HEK293 (cell line): ENCODE measurements at regions of chr12 and their contacts with region 1.

Region 1: DNA sequence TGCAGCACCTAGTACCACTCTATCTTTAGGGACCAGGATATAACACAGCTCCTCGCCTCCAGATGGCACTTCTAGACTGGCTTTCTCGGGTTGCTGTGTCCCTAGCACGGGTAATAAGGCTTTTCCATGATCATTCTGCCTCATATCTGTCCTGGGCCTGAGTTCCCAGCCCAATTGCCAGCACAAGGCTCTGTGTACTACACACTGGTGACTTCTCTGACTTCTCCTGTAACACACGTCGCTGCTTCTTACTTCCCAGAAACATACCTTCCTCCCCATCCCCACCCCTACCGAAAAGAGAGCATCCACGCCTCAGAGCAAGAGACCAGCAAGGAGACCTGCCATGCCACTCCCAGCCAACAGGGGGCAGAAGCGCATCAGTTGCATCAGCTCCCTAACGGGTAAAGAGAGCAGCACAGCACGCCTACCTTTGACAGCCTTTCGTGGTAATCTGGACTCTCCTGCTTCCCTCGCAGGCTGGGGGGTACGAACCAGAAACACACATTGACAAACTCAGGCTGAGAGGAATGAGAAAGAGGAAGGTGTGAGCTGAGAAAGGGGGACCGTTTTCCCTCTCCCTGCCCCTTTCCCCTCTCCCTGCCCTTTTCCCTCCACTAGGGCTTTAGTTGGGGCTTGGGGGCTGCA is 21.2 kb upstream of the ZNF740 start:
- H3K4me3 ChIP-seq: no peak overlapping the region
- H3K27ac ChIP-seq: no peak overlapping the region
- H3K4me1 ChIP-seq: no peaks in the 10 kb centered on the region
- CTCF ChIP-seq: peak; percentile 99

Region 2: GRCh38 chr12:53129170-53129569 is 30.1 kb before region 1 on chr12:
- CTCF ChIA-PET with region 1: interaction called, 18 read pairs
- POLR2A ChIA-PET with region 1: no interaction called
- H3K4me3 ChIP-seq: no peak overlapping the region
- H3K27ac ChIP-seq: no peak overlapping the region
- H3K4me1 ChIP-seq: no peaks in the 10 kb centered on the region
- CTCF ChIP-seq: no peak

Region 3: DNA sequence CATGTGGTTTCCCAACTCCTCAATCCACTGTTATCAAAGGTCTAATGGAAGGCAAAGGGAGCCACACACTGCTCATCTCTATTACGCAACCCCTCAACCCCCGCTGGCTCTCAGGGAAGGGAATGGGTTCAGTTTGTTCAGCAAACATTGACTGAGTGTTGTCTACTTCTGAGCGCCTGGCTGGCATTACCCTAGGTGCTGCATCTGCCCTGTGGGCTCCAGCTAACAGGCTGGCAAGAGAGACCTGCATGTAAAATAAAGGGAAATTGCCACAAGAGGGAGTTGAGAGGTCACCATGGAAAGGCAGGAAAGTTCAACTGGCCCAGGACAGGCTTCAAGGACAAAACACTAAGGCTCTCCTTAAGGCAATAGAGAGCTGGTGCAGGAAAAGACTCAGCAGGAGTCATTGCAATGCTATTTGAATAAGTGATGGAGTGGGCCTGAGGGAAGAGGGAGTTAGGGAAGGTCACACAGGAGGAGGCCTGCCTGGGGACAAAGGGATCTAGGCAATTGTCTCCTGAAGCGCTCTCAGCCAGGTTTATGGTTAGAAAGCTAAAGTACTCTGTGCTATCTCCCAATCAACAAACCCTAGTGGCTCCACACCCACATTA is 15.7 kb after region 1 on chr12:
- CTCF ChIA-PET with region 1: interaction called, 52 read pairs
- POLR2A ChIA-PET with region 1: interaction called, 16 read pairs
- H3K4me3 ChIP-seq: no peak overlapping the region
- H3K27ac ChIP-seq: no peak overlapping the region
- H3K4me1 ChIP-seq: peaks cover 28% of the 10 kb centered on the region
- CTCF ChIP-seq: no peak

Region 4: GRCh38 chr12:53180220-53180930 is 21.1 kb after region 1 on chr12 and contains the starts of genes CSAD and ZNF740:
- CTCF ChIA-PET with region 1: interaction called, 52 read pairs
- POLR2A ChIA-PET with region 1: interaction called, 16 read pairs
- H3K4me3 ChIP-seq: peak within 1 kb of the TSS; percentile 80
- H3K27ac ChIP-seq: peak within 1 kb of the TSS; percentile 80
- H3K4me1 ChIP-seq: peaks cover 16% of the 10 kb centered on the region; the same call in 1 of the 2 replicates
- CTCF ChIP-seq: peak; percentile 79

Region 5: DNA sequence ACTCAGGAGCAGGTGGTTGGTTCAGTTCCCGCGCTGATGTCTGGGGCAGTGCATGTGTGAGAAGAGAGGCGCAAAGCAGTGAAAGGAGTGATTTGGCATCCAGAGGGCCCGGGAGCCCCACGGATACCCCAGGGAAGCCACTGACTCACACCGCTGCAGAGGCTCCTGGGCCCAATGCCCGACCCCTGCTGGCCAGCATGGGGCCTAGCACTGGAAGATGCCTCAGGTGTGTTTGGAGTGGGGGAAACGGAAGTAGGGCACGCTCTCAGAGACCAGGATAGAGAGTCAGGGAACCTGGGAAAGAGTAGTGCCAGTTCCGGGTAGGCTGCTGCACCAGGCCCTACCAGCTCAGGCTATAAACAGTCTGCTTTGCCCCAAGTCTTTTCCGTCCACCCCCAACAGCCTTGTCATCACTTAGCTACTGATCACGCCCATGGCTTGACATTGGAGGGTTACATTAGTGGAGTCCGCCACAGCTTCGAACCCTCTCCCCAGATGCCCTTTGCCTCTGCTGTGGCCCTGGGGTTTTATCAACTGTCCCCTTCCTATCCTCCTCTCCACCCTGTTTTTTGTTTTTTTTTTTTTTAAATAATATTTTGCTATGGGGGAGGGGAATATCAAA is 30.9 kb after region 1 on chr12:
- CTCF ChIA-PET with region 1: interaction called, 94 read pairs
- POLR2A ChIA-PET with region 1: interaction called, 6 read pairs
- H3K4me3 ChIP-seq: no peak overlapping the region
- H3K27ac ChIP-seq: no peak overlapping the region
- H3K4me1 ChIP-seq: no peaks in the 10 kb centered on the region
- CTCF ChIP-seq: peak; percentile 58

Region 6: DNA sequence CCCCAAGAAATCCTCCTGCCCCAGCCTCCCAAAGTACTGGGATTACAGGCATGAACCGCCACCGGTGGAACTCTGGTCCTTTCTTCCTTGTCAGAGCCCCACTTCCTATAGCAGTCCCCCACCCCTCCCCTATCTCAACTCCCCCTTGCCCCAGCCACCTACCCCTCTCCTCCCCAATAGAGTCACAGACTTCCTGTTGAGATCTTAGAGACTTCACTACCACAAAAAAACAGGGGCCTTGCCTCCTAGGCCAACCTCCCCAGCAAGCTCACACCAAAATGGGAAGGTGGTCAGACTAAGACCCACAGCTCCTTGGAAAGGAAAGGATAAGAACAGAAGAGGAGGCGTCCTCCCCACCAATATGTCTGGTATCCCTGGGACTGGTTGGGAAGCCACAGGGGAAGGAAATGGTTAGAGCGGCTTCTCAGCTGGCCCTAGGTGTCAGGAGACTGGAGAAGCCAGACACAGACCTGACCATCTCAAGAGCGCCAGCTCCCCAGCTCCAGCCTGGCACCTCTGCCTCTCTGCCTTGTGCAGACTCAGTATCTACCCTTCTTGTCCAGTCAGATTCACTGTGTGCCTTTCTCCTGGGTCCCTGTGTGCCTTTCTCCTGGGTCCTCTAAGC is 39.3 kb after region 1 on chr12:
- CTCF ChIA-PET with region 1: interaction called, 94 read pairs
- POLR2A ChIA-PET with region 1: no interaction called
- H3K4me3 ChIP-seq: no peak overlapping the region
- H3K27ac ChIP-seq: no peak overlapping the region
- H3K4me1 ChIP-seq: no peaks in the 10 kb centered on the region
- CTCF ChIP-seq: no peak